ENCODE measurements at regions of chr6 and their contacts with region 1.

Region 1: DNA sequence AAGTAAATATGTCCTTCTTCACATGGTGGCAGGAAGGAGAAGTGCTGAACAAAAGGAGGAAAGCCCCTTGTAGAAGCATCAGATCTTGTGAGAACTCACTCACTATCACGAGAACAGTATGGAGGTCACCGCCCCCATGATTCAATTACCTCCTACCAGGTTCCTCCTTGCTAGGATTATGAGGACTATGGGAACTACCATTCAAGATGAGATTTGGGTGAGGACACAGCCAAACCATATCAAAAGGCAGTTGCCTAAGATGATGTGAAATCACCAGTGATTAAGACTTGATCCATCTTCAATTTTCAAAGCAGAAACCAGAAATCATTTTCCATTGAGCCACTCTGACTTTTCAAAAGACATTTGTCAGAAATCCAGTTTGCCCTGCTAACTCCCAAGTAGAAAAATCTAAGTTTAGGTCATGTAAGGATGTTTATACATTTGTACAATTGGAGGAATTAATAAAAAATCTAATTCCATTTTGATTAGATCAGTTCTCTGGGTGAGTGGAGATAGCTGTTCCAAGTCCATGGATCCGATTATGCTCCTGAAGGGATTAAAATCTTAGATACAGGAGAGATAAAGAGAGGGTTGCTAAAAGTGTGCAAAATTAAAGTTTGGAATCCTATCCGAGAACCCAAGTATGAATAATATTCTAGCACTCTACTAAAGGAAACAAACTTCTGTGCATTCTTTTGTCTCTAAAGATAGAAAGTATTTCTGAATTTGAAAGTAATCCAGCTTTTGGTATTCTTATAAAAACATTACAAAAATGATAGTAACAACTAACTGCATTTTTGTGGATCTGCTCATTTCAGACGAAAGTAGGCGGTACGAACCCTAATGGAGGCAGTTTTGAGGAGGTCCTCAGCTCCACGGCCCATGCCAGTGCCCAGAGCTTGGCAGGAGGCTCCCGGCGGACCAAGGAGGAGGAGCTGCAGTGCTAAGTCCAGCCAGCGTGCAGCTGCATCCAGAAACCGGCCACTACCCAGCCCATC is 39.5 kb downstream of the HDDC2 start:
- DNase-seq: peak in 1 of 2 donors; percentile 86
- H3K4me3 ChIP-seq: peak overlapping the region in 1 of 2 donors; percentile 16
- H3K27ac ChIP-seq: peak overlapping the region; percentile 66 to 71
- H3K4me1 ChIP-seq: peaks cover 0 to 13% of the 10 kb centered on the region in 2 donors
- H3K27me3 ChIP-seq: no peaks in the 10 kb centered on the region
- CTCF ChIP-seq: no peak

Region 2: GRCh38 chr6:125191916-125192609 is 70.3 kb before region 1 on chr6:
- intact Hi-C with region 1: loop called (anchors 5 kb)
- DNase-seq: peak; percentile 10 to 77
- H3K4me3 ChIP-seq: no peak overlapping the region
- H3K27ac ChIP-seq: no peak overlapping the region
- H3K4me1 ChIP-seq: peaks cover 10 to 30% of the 10 kb centered on the region in 2 donors
- H3K27me3 ChIP-seq: no peaks in the 10 kb centered on the region
- CTCF ChIP-seq: peak; percentile 49 to 71 (median 65)

Region 3: GRCh38 chr6:125220712-125221111 is 41.6 kb before region 1 on chr6:
- intact Hi-C with region 1: loop called (anchors 5 kb)
- DNase-seq: peak in 1 of 2 donors; percentile 75
- H3K4me3 ChIP-seq: no peak overlapping the region
- H3K27ac ChIP-seq: peak overlapping the region; percentile 80 to 90
- H3K4me1 ChIP-seq: peaks cover 13 to 29% of the 10 kb centered on the region in 2 donors
- H3K27me3 ChIP-seq: no peaks in the 10 kb centered on the region
- CTCF ChIP-seq: no peak

Region 4: DNA sequence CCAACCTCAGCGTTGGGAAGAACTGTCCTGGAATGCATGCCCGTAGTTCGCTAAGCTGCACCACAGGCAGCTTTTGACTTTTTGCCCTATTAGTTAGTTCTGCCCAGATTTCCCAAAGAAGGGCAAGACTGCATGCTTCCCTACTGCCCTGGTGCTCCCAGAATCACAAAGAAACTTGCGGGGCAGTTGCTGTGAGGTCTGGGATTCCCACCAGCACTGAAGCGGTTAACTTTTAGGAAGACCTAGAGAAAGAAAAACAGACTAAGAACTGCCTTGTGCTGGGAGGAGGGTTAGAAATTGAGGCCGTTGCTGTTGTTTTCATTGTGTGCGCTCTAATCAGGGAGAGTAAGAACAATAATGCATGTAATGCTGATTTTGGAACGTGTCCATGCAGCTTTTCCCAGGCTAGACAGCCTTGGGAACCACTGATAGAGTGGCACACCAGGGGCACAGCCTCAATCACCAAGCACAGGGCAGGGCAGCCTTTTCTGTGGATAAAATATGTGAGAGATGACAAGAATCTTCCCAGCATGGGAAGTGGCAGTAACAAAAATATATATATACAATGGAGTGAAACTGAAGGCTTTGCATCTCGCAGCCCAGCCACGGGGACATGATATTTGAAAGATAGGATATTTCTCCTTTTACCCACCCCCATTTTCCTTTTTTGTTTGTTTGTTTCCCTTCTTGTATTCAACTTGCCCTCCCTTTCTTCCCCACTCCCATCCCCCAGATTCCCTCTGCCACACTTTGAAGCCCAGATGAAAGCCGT is 349.4 kb after region 1 on chr6:
- intact Hi-C with region 1: no loop called
- DNase-seq: no peak
- H3K4me3 ChIP-seq: peak overlapping the region; percentile 34 to 59
- H3K27ac ChIP-seq: peak overlapping the region; percentile 62 to 78
- H3K4me1 ChIP-seq: peaks cover 0 to 17% of the 10 kb centered on the region in 2 donors
- H3K27me3 ChIP-seq: no peaks in the 10 kb centered on the region
- CTCF ChIP-seq: no peak

Region 5: DNA sequence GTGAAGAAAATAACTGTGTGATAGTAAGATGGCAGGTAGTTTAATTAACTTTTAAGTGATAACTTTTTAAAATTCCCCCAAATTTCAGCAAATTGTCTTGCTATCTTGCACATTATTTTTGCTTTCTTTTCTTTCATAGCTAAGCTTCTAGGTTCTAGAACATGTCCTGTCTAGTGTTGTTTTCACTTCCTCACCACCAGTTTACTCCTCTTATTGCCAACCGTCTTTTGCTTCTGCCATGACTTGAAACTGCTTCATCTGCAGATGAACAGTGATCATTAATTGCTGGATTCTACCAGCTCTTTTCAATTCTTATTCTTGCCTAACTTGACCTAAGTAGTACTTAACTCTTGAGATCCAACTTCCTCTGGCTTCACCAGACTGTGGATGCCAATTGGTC is 1215.4 kb after region 1 on chr6:
- intact Hi-C with region 1: no loop called
- DNase-seq: no peak
- H3K4me3 ChIP-seq: no peak overlapping the region
- H3K27ac ChIP-seq: no peak overlapping the region
- H3K4me1 ChIP-seq: no peaks in the 10 kb centered on the region
- H3K27me3 ChIP-seq: no peaks in the 10 kb centered on the region
- CTCF ChIP-seq: no peak

Measured in ascending aorta (tissue), 2 donors.